ENCODE measurements at regions of chr1 and their contacts with region 1.

Region 1: GRCh38 chr1:91529856-91530255 is 29.2 kb downstream of the CDC7 start:
- DNase-seq: no peak
- ATAC-seq: no peak
- H3K4me3 Mint-ChIP-seq: no peak overlapping the region
- H3K27ac Mint-ChIP-seq: no peak overlapping the region
- H3K4me1 Mint-ChIP-seq: peaks cover 10% of the 10 kb centered on the region
- H3K27me3 Mint-ChIP-seq: no peaks in the 10 kb centered on the region
- CTCF ChIP-seq: no peak

Region 2: GRCh38 chr1:91499346-91499745 is 30.5 kb before region 1 on chr1:
- CTCF ChIA-PET with region 1: no interaction called
- POLR2A ChIA-PET with region 1: no interaction called
- intact Hi-C with region 1: no loop called
- DNase-seq: no peak
- ATAC-seq: no peak
- H3K4me3 Mint-ChIP-seq: no peak overlapping the region
- H3K27ac Mint-ChIP-seq: no peak overlapping the region
- H3K4me1 Mint-ChIP-seq: peaks cover 9% of the 10 kb centered on the region
- H3K27me3 Mint-ChIP-seq: no peaks in the 10 kb centered on the region
- CTCF ChIP-seq: no peak

Region 3: DNA sequence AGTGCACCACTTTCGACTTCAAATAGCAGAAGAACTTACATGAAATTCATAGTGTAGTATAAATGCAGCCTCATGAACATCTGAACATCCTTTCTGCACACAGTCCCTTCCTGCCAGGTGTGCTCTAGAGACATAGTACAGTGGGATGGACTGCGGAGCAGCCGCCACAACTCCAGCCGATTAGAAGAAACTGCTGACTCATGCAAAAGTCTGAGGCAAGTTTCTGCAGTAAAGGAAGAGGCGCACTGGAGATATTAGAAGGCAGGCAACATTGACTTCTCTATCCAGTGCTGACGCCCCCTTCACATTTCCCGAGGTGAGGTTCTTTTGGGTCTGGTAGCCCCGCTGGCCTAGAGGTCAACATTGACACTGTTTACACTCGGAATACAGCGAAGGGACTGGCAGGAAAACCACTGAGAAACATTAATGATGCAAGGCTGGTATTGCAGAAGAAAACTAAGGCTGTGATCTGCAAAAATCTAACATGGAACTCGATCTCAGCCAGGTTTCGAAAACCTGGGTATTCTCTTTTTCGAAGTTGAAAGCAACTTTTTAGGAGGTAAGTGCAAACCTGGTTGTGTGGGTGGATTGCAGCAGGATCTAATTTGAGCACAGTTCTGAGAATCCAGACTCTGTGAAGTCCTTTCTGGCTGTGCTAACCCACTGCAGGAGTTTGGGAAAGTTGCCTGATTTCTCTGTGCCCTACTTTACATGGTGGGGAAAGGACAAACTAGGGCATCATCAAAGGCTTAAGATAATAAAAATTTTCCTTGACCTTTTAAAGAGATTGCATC is 61.5 kb after region 1 on chr1:
- CTCF ChIA-PET with region 1: no interaction called
- POLR2A ChIA-PET with region 1: no interaction called
- intact Hi-C with region 1: loop called (anchors 10 kb)
- DNase-seq: peak; percentile 24
- ATAC-seq: peak; percentile 68
- H3K4me3 Mint-ChIP-seq: peak overlapping the region; percentile 29
- H3K27ac Mint-ChIP-seq: peak overlapping the region; percentile 62
- H3K4me1 Mint-ChIP-seq: peaks cover 21% of the 10 kb centered on the region
- H3K27me3 Mint-ChIP-seq: peaks cover 5% of the 10 kb centered on the region
- CTCF ChIP-seq: no peak